ENCODE measurements at regions of chr4 and their contacts with region 1.

Region 1: DNA sequence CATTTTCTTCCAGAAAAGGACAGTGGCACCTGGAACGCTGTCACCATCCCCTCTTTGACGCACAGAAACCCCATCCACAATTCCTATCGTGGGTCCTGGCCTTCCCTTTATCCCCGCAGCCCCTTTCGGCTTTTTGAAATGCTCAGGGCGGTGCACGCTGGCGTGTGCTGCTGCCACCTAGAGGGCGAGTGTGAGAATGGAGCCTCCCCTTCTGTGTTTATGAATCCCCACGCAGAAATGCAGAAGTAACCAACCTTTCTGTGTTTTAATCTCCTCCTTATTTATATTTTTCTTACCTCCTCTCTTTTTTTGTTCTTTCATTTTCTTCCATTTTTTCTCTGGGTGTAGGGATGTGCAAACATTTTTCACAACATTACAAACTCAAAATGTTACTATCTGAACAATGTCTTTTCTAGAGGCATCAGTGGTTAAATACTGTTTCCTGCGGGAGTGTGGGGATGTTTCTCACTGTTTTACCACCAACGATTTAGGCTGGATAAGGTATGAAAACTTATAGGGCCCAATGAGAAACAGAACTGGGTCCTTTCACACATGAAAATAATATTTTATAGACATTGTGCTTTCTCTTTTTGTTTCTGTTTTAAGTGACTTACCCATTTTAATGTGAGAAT is 50.0 kb downstream of the TMA16 start:
- DNase-seq: peak; percentile 34 to 61 (median 55)
- ATAC-seq: peak; percentile 64 to 87 (median 80)
- H3K4me3 ChIP-seq: peak overlapping the region in 9 of 12 donors; percentile 2 to 54 (median 37)
- H3K27ac ChIP-seq: no peak overlapping the region
- H3K4me1 ChIP-seq: peaks cover 0 to 12% (median 0%) of the 10 kb centered on the region in 12 donors
- H3K27me3 ChIP-seq: no peaks in the 10 kb centered on the region
- CTCF ChIP-seq: peak; percentile 82 to 94 (median 89)
- POLR2A ChIP-seq: no peak

Region 2: GRCh38 chr4:162497564-162498167 is 1046.9 kb before region 1 on chr4:
- intact Hi-C with region 1: loop called in 9 of 10 experiments (anchors 2 to 10 kb)
- DNase-seq: no peak
- ATAC-seq: peak; percentile 73 to 84 (median 78)
- H3K4me3 ChIP-seq: peak overlapping the region in 7 of 12 donors; percentile 18 to 36 (median 23)
- H3K27ac ChIP-seq: no peak overlapping the region
- H3K4me1 ChIP-seq: peaks cover 0 to 3% (median 0%) of the 10 kb centered on the region in 12 donors
- H3K27me3 ChIP-seq: peaks cover 0 to 2% (median 0%) of the 10 kb centered on the region in 9 donors
- CTCF ChIP-seq: peak; percentile 72 to 92 (median 82)
- POLR2A ChIP-seq: no peak

Region 3: GRCh38 chr4:162645381-162645780 is 899.1 kb before region 1 on chr4:
- intact Hi-C with region 1: loop called in 1 of 10 experiments (anchors 10 kb)
- DNase-seq: no peak
- ATAC-seq: peak in 2 of 4 donors; percentile 50 to 59
- H3K4me3 ChIP-seq: no peak overlapping the region
- H3K27ac ChIP-seq: no peak overlapping the region
- H3K4me1 ChIP-seq: no peaks in the 10 kb centered on the region
- H3K27me3 ChIP-seq: no peaks in the 10 kb centered on the region
- CTCF ChIP-seq: peak in 11 of 12 donors; percentile 26 to 60 (median 49)
- POLR2A ChIP-seq: no peak

Region 4: GRCh38 chr4:163111593-163111992 is 432.9 kb before region 1 on chr4:
- intact Hi-C with region 1: loop called in 1 of 10 experiments (anchors 5 kb)
- DNase-seq: no peak
- ATAC-seq: no peak
- H3K4me3 ChIP-seq: no peak overlapping the region
- H3K27ac ChIP-seq: no peak overlapping the region
- H3K4me1 ChIP-seq: peaks cover 0 to 8% (median 0%) of the 10 kb centered on the region in 12 donors
- H3K27me3 ChIP-seq: no peaks in the 10 kb centered on the region
- CTCF ChIP-seq: peak in 3 of 12 donors; percentile 9 to 21 (median 9)
- POLR2A ChIP-seq: no peak

Region 5: GRCh38 chr4:163166041-163166579 is 378.4 kb before region 1 on chr4:
- intact Hi-C with region 1: loop called in 1 of 10 experiments (anchors 2 kb)
- DNase-seq: peak; percentile 28 to 73 (median 45)
- ATAC-seq: peak in 3 of 4 donors; percentile 67 to 80 (median 75)
- H3K4me3 ChIP-seq: peak overlapping the region; percentile 71 to 94 (median 89)
- H3K27ac ChIP-seq: peak overlapping the region; percentile 59 to 94 (median 86)
- H3K4me1 ChIP-seq: peaks cover 0 to 33% (median 19%) of the 10 kb centered on the region in 12 donors
- H3K27me3 ChIP-seq: no peaks in the 10 kb centered on the region
- CTCF ChIP-seq: no peak
- POLR2A ChIP-seq: no peak

Region 6: DNA sequence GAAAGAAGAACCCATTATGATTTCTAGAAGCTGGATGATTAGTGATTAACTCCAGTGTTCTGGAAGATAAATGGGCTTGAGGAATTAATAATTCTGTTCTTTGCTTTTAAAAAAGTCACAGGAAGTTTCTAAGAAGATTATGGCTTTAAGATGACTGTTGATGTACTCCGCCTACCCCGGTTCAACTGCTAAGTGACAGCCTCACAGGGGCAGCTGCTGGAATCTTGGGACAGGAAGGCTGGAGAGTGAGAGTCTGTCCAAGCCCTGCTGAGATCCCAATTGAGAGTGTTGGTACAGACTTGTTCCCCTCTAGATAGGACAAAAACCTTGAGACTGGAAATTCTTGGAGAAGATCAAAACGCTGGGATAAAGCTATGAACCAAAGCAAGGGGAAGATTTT is 249.4 kb before region 1 on chr4:
- intact Hi-C with region 1: no loop called
- DNase-seq: no peak
- ATAC-seq: no peak
- H3K4me3 ChIP-seq: no peak overlapping the region
- H3K27ac ChIP-seq: no peak overlapping the region
- H3K4me1 ChIP-seq: no peaks in the 10 kb centered on the region
- H3K27me3 ChIP-seq: no peaks in the 10 kb centered on the region
- CTCF ChIP-seq: no peak
- POLR2A ChIP-seq: no peak

Region 7: GRCh38 chr4:163484906-163485305 is 59.6 kb before region 1 on chr4:
- intact Hi-C with region 1: loop called (anchors 1 to 5 kb)
- DNase-seq: peak in 3 of 5 donors; percentile 18 to 36 (median 30)
- ATAC-seq: no peak
- H3K4me3 ChIP-seq: no peak overlapping the region
- H3K27ac ChIP-seq: no peak overlapping the region
- H3K4me1 ChIP-seq: peaks cover 0 to 20% (median 0%) of the 10 kb centered on the region in 12 donors
- H3K27me3 ChIP-seq: no peaks in the 10 kb centered on the region
- CTCF ChIP-seq: peak; percentile 33 to 68 (median 54)
- POLR2A ChIP-seq: no peak

Region 8: GRCh38 chr4:163930086-163930485 is 385.6 kb after region 1 on chr4:
- intact Hi-C with region 1: no loop called
- DNase-seq: no peak
- ATAC-seq: no peak
- H3K4me3 ChIP-seq: no peak overlapping the region
- H3K27ac ChIP-seq: no peak overlapping the region
- H3K4me1 ChIP-seq: no peaks in the 10 kb centered on the region
- H3K27me3 ChIP-seq: no peaks in the 10 kb centered on the region
- CTCF ChIP-seq: no peak
- POLR2A ChIP-seq: no peak